Naive thymus-derived CD8-positive, alpha-beta T cell (primary cell): ENCODE measurements at regions of chr1 and their contacts with region 1.

Region 1: DNA sequence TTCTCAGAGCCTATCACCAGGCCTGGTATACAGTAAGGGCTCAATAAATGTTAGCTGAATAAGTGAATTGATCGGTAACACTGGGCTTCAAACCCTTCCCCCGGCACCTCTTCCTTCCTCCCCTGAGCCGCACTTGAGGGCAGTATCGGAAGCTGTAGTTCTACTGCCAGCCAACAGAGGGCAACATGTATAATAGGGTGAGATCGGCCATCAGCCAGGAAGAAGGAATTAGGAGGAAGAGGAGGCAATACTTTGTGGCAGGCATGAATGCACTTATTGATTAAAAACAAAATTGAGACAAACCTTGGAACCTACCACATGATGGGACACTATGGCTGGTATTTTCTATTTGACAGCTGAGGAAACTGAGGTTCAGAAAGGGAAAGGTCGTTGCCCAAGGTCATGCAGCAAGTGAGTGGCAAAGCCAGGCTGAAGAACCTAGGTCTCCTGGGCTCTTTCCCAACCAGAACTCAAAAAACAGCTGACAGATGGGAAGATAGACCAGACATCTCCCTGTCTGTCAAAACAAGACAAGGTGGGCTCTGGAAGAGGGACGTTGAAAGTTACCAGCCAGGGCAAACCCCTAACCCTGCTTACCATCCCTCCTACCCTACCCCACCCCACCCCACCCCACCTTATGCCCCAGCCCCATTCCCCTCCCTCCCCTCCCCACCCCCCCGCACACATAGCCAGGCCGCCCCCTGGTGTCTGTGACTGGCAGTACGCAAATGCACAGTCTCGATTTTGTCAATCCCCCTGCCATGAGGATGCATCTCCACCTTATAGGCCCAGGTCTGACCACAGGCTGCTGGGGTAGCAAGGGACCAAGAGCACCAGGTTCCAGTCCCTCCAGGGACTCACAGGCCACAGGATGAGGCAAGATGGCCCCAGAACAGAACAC is 107.3 kb upstream of the RUNX3 start:
- DNase-seq: peak; percentile 37 to 81 (median 56)
- ATAC-seq: peak; percentile 45 to 54
- H3K4me3 Mint-ChIP-seq: peak overlapping the region in 7 of 10 donors; percentile 1 to 29 (median 14)
- H3K27ac Mint-ChIP-seq: peak overlapping the region in 8 of 10 donors; percentile 12 to 90 (median 50)
- H3K4me1 Mint-ChIP-seq: peaks cover 32 to 42% (median 36%) of the 10 kb centered on the region in 4 donors
- H3K27me3 Mint-ChIP-seq: no peaks in the 10 kb centered on the region

Region 2: GRCh38 chr1:24847995-24848881 is 189.2 kb before region 1 on chr1:
- POLR2A ChIA-PET with region 1: interaction called, 12 read pairs
- DNase-seq: peak; percentile 79 to 95 (median 88)
- ATAC-seq: peak; percentile 94 to 95
- H3K4me3 Mint-ChIP-seq: peak overlapping the region; percentile 66 to 82 (median 78)
- H3K27ac Mint-ChIP-seq: peak overlapping the region in 9 of 10 donors; percentile 53 to 89 (median 80)
- H3K4me1 Mint-ChIP-seq: peaks cover 2 to 36% (median 18%) of the 10 kb centered on the region in 4 donors
- H3K27me3 Mint-ChIP-seq: peaks cover 0 to 1% (median 0%) of the 10 kb centered on the region in 5 donors

Region 3: GRCh38 chr1:25080294-25081209 is 43.1 kb after region 1 on chr1:
- POLR2A ChIA-PET with region 1: no interaction called
- DNase-seq: no peak
- ATAC-seq: no peak
- H3K4me3 Mint-ChIP-seq: no peak overlapping the region
- H3K27ac Mint-ChIP-seq: peak overlapping the region in 3 of 10 donors; percentile 3 to 59 (median 19)
- H3K4me1 Mint-ChIP-seq: peaks cover 3 to 6% (median 4%) of the 10 kb centered on the region in 4 donors
- H3K27me3 Mint-ChIP-seq: no peaks in the 10 kb centered on the region